ENCODE measurements at regions of chr1 and their contacts with region 1.

Region 1: GRCh38 chr1:179002552-179003345 is 22.9 kb upstream of the FAM20B start:
- DNase-seq: peak; percentile 88
- H3K4me3 Mint-ChIP-seq: peak overlapping the region; percentile 30
- H3K27ac Mint-ChIP-seq: no peak overlapping the region
- H3K4me1 Mint-ChIP-seq: peaks cover 10% of the 10 kb centered on the region
- H3K27me3 Mint-ChIP-seq: no peaks in the 10 kb centered on the region
- CTCF ChIP-seq: peak; percentile 97

Region 2: GRCh38 chr1:178300352-178300699 is 702.4 kb before region 1 on chr1:
- CTCF ChIA-PET with region 1: no interaction called
- intact Hi-C with region 1: loop called (anchors 1 kb)
- DNase-seq: no peak
- H3K4me3 Mint-ChIP-seq: no peak overlapping the region
- H3K27ac Mint-ChIP-seq: peak overlapping the region; percentile 32
- H3K4me1 Mint-ChIP-seq: peaks cover 32% of the 10 kb centered on the region
- H3K27me3 Mint-ChIP-seq: no peaks in the 10 kb centered on the region
- CTCF ChIP-seq: no peak

Region 3: DNA sequence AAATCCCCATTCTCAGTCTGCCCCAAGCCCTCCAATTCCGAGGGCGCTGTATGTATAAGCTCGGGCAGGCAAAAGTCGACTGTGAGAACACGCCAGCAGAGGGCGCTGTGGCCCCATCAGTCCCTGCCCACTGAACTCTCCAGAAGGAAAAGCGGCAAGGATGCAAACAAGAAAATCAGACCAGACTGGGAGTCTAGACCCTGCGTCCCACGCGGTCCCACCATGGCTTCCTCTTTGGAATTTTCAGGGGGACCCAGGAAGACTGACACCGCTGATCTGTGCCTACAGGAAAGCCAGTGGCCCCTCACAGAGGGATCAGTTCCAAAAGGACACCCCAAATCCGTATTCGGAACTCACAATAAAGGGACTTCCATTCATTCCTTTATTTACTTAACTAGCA is 470.4 kb before region 1 on chr1:
- CTCF ChIA-PET with region 1: interaction called, 18 read pairs
- intact Hi-C with region 1: loop called (anchors 1 kb)
- DNase-seq: peak; percentile 91
- H3K4me3 Mint-ChIP-seq: no peak overlapping the region
- H3K27ac Mint-ChIP-seq: no peak overlapping the region
- H3K4me1 Mint-ChIP-seq: peaks cover 47% of the 10 kb centered on the region
- H3K27me3 Mint-ChIP-seq: no peaks in the 10 kb centered on the region
- CTCF ChIP-seq: peak; percentile 97

Region 4: DNA sequence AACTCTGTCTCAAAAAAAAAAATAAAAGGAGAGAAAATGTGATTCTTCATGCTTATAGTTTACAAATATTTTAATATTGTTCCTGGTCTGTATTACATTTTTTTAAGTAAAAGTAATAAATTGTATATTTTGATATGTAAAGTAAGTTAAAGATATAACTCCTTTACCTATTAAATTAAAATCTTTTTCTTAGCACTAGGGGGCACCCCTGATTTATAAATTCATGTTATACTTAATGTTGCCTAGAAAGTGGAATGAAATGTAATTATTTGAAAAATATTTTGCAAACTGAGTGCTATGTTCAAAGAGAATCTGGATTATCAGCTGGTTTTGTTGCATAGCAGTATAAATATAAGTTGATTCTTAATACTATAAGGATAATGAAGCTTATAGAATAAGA is 228.5 kb before region 1 on chr1:
- CTCF ChIA-PET with region 1: no interaction called
- intact Hi-C with region 1: loop called (anchors 1 kb)
- DNase-seq: no peak
- H3K4me3 Mint-ChIP-seq: no peak overlapping the region
- H3K27ac Mint-ChIP-seq: no peak overlapping the region
- H3K4me1 Mint-ChIP-seq: no peaks in the 10 kb centered on the region
- H3K27me3 Mint-ChIP-seq: no peaks in the 10 kb centered on the region
- CTCF ChIP-seq: peak; percentile 28

Region 5: DNA sequence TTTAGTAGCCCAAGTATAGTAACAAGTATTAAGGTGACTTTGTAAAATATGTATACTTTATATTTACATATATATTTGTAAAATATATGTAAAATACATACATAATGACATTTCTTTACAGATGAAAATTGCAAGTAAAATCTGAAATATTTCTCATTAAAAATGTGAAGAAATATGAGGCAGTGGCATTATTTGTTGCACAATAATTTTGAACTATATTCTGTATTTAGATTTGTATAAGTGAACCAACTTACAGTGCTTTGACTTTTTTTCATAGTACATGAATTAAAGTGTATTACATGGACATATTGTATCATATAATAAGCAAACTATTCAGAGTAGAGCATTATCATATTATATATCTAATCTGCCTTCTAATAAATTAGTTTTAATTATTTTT is 192.2 kb before region 1 on chr1:
- CTCF ChIA-PET with region 1: interaction called, 3 read pairs
- intact Hi-C with region 1: loop called (anchors 5 kb)
- DNase-seq: no peak
- H3K4me3 Mint-ChIP-seq: no peak overlapping the region
- H3K27ac Mint-ChIP-seq: no peak overlapping the region
- H3K4me1 Mint-ChIP-seq: no peaks in the 10 kb centered on the region
- H3K27me3 Mint-ChIP-seq: no peaks in the 10 kb centered on the region
- CTCF ChIP-seq: no peak

Region 6: GRCh38 chr1:178870944-178871343 is 131.8 kb before region 1 on chr1 and contains the start of gene ANGPTL1:
- CTCF ChIA-PET with region 1: interaction called, 14 read pairs
- intact Hi-C with region 1: no loop called
- DNase-seq: no peak
- H3K4me3 Mint-ChIP-seq: peak within 1 kb of the TSS; percentile 6
- H3K27ac Mint-ChIP-seq: peak within 1 kb of the TSS; percentile 33
- H3K4me1 Mint-ChIP-seq: peaks cover 36% of the 10 kb centered on the region
- H3K27me3 Mint-ChIP-seq: no peaks in the 10 kb centered on the region
- CTCF ChIP-seq: no peak
- total RNA-seq, gene ANGPTL1: 0.35 and 0.59 TPM in 2 replicates

Region 7: GRCh38 chr1:179340918-179341317 is 338.2 kb after region 1 on chr1:
- CTCF ChIA-PET with region 1: no interaction called
- intact Hi-C with region 1: no loop called
- DNase-seq: no peak
- H3K4me3 Mint-ChIP-seq: no peak overlapping the region
- H3K27ac Mint-ChIP-seq: peak overlapping the region; percentile 21
- H3K4me1 Mint-ChIP-seq: no peaks in the 10 kb centered on the region
- H3K27me3 Mint-ChIP-seq: no peaks in the 10 kb centered on the region
- CTCF ChIP-seq: no peak

Region 8: GRCh38 chr1:179441501-179441900 is 438.8 kb after region 1 on chr1:
- CTCF ChIA-PET with region 1: no interaction called
- intact Hi-C with region 1: no loop called
- DNase-seq: no peak
- H3K4me3 Mint-ChIP-seq: peak overlapping the region; percentile 13
- H3K27ac Mint-ChIP-seq: no peak overlapping the region
- H3K4me1 Mint-ChIP-seq: peaks cover 21% of the 10 kb centered on the region
- H3K27me3 Mint-ChIP-seq: no peaks in the 10 kb centered on the region
- CTCF ChIP-seq: no peak

Region 9: GRCh38 chr1:179586107-179586823 is 583.5 kb after region 1 on chr1:
- CTCF ChIA-PET with region 1: no interaction called
- intact Hi-C with region 1: no loop called
- DNase-seq: peak; percentile 80
- H3K4me3 Mint-ChIP-seq: peak overlapping the region; percentile 26
- H3K27ac Mint-ChIP-seq: no peak overlapping the region
- H3K4me1 Mint-ChIP-seq: no peaks in the 10 kb centered on the region
- H3K27me3 Mint-ChIP-seq: peaks cover 84% of the 10 kb centered on the region
- CTCF ChIP-seq: peak; percentile 85